Activated CD4-positive, alpha-beta T cell treated with anti-CD3 and anti-CD28 coated beads, Interleukin-2, amount 10 ng/mL, durations not matched to agents 7 days and 5 days (primary cell): ENCODE measurements at regions of chr12 and their contacts with region 1.

Region 1: GRCh38 chr12:49623142-49623904 is at the start of gene PRPF40B:
- DNase-seq: peak; percentile 84
- H3K4me3 Mint-ChIP-seq: peak within 1 kb of the TSS; percentile 81
- H3K27ac Mint-ChIP-seq: peak within 1 kb of the TSS; percentile 91
- H3K4me1 Mint-ChIP-seq: peaks cover 34% of the 10 kb centered on the region
- H3K27me3 Mint-ChIP-seq: peaks cover 21% of the 10 kb centered on the region
- total RNA-seq, gene PRPF40B: 11.6 to 11.7 TPM

Region 2: DNA sequence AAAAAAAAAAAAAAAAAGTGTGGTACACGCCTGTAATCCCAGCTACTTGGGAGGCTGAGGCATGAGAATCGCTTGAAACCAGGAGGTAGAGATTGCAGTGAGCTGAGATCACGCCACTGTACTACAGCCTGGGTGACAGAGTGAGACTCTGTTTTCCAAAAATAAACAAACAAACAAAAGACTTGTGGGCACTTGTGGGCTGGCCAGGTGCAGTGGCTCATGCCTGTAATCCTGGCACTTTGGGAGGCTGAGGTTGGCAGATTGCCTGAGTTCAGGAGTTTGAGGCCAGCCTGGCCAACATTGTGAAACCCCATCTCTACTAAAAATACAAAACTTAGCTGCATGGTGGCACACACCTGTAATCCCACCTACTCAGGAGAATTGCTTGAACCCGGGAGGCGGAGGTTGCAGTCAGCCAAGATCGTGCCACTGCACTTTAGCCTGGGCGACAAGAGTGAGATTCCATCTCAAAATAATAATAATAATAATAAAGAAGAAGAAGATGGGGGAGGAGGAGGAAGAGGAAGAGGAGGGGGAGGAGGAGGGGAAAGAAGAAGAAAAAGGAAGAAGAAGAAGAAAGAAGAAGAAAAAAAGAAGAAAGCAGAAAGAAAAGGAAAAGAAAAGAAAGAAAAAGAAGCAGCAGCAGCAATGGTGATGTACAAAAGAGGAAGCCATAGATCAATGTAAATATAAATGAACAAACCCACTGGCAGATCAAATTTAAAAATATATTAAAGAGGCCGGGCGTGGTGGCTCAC is 878.9 kb before region 1 on chr12:
- CTCF ChIA-PET with region 1: no interaction called
- POLR2A ChIA-PET with region 1: no interaction called
- DNase-seq: no peak
- H3K4me3 Mint-ChIP-seq: no peak overlapping the region
- H3K27ac Mint-ChIP-seq: no peak overlapping the region
- H3K4me1 Mint-ChIP-seq: no peaks in the 10 kb centered on the region
- H3K27me3 Mint-ChIP-seq: peaks cover 18% of the 10 kb centered on the region

Region 3: DNA sequence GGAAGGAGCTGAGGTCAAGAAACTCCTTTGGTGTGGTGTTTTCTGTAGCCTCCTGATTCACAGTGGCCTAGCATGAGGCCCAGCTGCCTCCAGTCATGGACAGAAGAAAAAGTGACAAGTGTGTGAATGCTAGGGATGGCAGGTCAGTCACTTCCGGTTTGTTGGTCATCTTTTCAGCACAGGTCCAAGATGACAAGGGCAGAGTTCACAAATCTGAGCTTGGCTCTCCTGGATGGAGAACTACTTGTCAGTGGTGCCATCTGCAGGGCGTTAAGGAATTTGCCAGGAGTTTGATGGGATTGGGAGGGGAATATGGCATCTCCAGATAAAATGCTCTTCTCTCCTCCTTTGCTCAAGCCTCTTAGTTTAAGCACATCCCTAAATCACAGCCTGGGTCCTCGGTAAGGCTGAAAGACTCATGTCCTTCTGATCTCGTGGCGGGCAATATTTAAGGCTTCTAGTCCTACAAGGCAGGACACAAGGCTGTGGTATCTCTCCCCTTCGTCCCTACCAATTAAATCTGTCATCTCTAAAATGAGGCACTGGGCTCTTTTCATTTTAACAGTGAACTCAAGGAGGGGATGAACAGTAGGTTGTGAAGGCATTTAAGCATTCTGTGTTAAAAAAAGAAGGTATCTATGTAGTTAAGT is 502.2 kb before region 1 on chr12:
- CTCF ChIA-PET with region 1: no interaction called
- POLR2A ChIA-PET with region 1: no interaction called
- DNase-seq: no peak
- H3K4me3 Mint-ChIP-seq: no peak overlapping the region
- H3K27ac Mint-ChIP-seq: no peak overlapping the region
- H3K4me1 Mint-ChIP-seq: no peaks in the 10 kb centered on the region
- H3K27me3 Mint-ChIP-seq: no peaks in the 10 kb centered on the region

Region 4: DNA sequence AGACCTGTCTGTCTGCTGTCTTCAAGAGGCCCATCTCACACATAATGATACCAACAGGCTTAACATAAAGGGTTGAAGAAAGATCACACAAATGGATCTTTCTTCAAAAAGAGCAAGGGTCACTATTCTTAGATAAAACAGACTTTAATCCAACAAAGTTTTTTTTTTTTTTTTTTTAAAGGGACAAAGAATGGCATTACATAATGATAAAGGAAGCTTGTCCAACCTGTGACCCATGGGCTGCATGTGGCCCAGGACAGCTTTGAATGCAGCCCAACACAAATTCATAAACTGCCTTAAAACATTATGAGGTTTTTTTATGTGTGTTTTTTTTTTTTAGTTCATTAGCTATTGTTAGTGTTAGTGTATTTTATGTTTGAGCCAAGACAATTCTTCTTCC is 11.1 kb before region 1 on chr12:
- CTCF ChIA-PET with region 1: no interaction called
- POLR2A ChIA-PET with region 1: no interaction called
- DNase-seq: no peak
- H3K4me3 Mint-ChIP-seq: no peak overlapping the region
- H3K27ac Mint-ChIP-seq: no peak overlapping the region
- H3K4me1 Mint-ChIP-seq: peaks cover 5% of the 10 kb centered on the region
- H3K27me3 Mint-ChIP-seq: peaks cover 15% of the 10 kb centered on the region

Region 5: DNA sequence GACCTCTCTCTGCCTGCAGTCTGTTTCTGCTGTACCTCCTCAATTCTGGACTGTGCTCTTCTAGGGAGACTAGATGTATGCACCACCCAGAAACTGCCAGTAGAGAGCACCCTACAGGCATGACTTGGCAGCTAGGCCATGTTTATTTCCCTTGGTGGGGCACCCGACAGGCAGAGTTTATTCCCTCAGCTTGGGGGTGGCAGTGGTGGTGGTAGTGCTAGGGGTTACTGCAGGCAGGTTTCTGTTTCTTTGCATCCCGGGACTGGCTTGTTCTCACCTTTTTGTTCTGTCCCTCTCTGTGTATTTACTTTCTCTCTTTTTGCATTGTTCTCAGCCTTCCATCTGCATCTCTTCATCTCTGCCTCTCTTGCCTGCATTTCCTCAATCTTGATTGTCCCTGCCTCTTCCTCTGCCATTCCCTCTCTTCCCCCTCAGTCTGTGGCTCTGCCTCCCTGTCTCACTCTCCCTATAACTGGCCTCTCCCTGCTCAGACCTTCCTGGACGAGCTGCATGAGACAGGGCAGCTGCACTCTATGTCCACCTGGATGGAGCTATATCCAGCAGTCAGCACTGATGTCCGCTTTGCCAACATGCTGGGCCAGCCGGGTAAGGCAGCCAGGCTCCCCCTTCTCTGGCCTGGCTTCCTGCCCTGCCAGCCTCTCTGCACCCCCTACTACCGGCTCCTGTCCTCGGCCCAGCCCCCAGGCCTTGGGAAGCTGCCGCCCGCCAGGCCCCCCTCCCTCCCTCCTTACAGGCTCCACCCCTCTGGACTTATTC is 13.8 kb after region 1 on chr12:
- CTCF ChIA-PET with region 1: interaction called, 21 read pairs
- POLR2A ChIA-PET with region 1: no interaction called
- DNase-seq: peak; percentile 78
- H3K4me3 Mint-ChIP-seq: no peak overlapping the region
- H3K27ac Mint-ChIP-seq: peak overlapping the region; percentile 58
- H3K4me1 Mint-ChIP-seq: peaks cover 12% of the 10 kb centered on the region
- H3K27me3 Mint-ChIP-seq: no peaks in the 10 kb centered on the region

Region 6: DNA sequence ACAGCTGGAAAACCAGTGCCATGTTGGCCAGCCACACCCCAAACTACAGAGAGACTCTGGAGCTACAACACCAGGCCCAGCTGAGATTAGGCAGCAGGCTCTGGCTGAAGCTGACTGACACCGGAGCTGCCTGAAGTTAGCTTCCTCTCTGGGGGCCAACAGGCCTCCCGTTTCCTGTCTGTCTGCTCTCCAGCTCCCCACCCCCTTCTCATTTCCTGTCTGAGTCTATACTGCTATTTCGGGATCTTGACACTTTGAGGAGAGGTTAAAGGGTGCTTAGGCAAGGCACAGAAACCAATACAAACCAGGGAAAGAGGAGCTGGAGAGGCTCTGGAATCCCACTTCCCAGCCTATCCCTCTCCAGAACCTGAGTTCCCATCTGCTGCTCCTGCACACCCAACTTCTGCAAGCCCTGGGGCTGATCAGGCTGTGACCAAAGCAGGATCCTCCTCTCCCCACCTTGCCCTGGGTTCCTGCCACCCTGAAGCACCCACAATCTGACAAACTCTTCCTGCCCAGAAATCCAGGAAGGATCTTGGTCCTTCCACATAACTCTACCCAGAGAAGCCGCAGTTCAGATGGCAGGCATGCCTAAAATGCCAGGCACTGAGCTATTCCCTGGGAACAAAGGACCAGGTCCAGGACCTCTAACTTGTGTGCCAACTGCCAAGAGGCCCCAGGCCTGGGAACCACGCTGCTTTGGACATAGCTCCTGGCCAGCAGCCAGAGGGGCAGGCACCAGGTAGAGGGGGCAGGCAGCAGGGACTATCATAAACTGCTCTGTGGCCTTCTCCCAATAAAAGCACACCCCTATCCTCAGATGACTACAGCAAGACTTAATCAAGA is 39.9 kb after region 1 on chr12:
- CTCF ChIA-PET with region 1: no interaction called
- POLR2A ChIA-PET with region 1: no interaction called
- DNase-seq: peak; percentile 85
- H3K4me3 Mint-ChIP-seq: peak overlapping the region; percentile 69
- H3K27ac Mint-ChIP-seq: peak overlapping the region; percentile 96
- H3K4me1 Mint-ChIP-seq: peaks cover 70% of the 10 kb centered on the region
- H3K27me3 Mint-ChIP-seq: no peaks in the 10 kb centered on the region